ENCODE measurements at regions of chr16 and their contacts with region 1.

Region 1: GRCh38 chr16:21656795-21657768 is 4.7 kb upstream of the IGSF6 start:
- DNase-seq: no peak
- H3K4me3 ChIP-seq: no peak overlapping the region
- CTCF ChIP-seq: peak; percentile 73

Region 2: DNA sequence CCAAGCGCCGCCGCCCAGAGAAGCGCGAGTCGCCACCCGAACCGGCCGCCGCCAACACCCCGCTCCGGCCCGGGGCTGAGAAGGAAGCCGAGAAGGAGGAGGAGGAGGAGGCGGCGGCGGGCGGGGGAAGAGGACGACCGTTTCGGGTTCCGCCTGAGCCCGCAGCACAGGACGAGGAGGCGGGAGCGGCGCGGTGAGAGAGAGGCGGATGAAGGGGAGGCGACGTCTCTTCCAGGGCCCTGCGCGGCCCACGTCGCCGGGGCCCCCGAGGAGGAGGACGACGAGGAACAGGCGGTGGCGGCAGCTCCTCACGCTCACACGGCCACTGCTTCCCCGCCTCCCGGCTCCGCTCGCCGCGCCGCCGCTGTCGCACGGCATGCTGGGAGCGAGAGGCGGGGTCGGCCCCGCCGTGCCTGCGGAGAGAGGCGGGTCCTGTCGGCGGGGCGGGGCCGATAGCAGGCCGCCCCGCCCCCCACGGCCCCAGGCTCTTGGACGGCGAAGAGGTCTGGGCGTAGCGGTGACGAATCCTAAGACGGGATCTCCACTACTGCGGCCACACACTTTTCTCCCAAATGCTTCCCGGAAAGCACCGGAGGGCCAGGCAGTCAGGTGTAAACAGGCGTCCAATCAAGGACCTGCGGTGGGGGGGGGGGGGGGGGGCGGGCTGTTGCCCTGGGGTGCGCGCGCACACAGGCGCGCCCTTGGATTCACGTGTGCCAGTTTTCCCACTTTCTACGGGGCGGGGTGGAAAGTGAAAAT is 155.0 kb before region 1 on chr16:
- CTCF ChIA-PET with region 1: no interaction called
- POLR2A ChIA-PET with region 1: no interaction called
- DNase-seq: peak; percentile 74
- H3K4me3 ChIP-seq: peak overlapping the region; percentile 67
- CTCF ChIP-seq: no peak

Region 3: DNA sequence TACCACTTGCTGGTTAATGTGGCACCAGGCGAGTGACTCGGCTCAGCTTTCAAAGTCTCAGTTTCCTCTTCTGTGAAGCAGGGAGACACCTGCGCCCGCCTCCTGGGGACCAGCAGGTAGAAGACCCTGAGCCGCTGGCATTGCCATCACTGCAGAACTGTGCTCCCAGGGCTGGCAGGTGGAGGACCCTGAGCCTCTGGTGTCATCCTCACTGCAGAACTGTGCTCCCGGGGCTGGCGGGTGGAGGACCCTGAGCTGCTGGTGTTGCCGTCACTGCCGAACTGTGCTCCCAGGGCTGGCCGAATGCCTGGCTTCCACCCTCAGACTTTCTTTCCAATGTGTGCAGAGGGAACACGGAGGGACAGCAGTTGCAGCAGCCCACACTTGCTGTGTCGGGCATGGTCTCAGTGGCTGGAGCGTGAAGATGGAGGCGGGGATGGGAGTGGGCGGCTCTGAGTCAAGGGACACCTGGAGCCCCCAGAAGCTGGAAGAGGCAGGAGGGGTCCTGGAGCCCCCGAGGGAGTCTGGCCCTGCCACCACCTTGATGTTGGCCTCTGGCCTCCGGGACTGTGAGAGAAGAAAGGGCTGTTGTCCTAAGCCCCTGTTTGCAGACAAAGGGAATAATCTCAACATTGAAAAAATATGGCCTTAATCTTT is 133.5 kb before region 1 on chr16:
- CTCF ChIA-PET with region 1: no interaction called
- POLR2A ChIA-PET with region 1: no interaction called
- DNase-seq: no peak
- H3K4me3 ChIP-seq: no peak overlapping the region
- CTCF ChIP-seq: no peak

Region 4: GRCh38 chr16:21590287-21590686 is 66.8 kb before region 1 on chr16:
- CTCF ChIA-PET with region 1: interaction called, 33 read pairs
- POLR2A ChIA-PET with region 1: no interaction called
- DNase-seq: no peak
- H3K4me3 ChIP-seq: no peak overlapping the region
- CTCF ChIP-seq: no peak

Region 5: GRCh38 chr16:21626659-21627277 is 30.3 kb before region 1 on chr16:
- CTCF ChIA-PET with region 1: interaction called, 13 read pairs
- POLR2A ChIA-PET with region 1: no interaction called
- DNase-seq: peak; percentile 79
- H3K4me3 ChIP-seq: peak overlapping the region; percentile 21; the same call in 1 of the 2 replicates
- CTCF ChIP-seq: no peak

Region 6: DNA sequence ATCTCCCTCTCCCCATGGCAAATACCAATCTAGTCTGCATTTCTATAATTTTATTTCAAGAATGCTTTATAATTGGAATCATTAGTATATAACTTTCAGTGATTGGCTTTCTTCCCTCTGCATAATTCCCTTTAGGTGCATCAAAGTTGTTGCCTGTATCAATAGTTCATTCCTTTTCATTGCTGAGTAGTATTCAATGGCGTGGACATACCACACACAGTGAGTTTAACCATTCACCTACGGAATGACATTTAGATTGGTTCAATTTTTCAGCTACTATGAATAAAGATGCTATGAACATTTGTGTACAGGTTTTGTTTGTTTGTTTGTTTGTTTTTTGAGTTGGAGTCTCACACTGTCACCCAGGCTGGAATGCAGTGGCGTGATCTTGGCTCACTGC is 16.4 kb after region 1 on chr16:
- CTCF ChIA-PET with region 1: interaction called, 39 read pairs
- POLR2A ChIA-PET with region 1: no interaction called
- DNase-seq: no peak
- H3K4me3 ChIP-seq: no peak overlapping the region
- CTCF ChIP-seq: no peak

Region 7: DNA sequence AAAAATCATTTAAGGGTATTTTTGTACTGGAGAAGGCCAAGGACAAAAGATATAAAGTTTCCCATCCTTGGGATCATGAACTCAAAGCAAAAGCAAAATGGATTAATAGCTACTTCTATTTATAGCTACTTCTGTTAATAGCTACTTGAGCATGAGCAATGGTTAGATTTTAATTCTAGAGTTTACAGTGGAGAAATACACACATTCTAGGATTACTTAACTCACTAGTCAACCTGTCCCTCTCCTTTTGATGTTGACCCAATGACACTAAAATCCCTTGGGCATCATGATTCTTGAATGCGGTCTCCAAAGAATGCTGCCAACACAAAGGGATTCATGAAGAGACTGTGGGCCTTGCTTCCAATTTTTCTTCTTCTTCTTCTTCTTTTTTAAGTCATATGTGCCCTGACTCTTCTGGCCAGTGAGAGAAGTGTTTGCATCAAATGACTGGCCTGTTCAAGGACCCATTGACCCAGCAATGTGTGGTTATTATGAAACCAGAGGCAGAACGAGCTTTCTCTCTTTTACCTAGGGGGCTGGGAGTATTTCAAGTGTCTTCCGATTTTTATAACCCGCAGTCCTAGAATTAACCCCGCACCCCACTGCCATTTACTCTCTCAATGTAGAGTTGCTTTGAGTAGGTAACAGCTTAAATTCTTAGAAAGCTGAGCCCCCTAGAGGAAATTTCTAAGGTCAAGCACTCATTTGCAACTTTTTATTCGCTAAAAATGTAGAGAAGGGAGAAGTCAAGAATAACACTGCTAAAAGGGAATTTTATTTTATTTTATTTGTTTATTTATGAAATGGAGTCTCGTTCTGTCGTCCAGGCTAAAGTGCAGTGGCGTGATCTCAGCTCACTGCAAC is 41.3 kb after region 1 on chr16:
- CTCF ChIA-PET with region 1: interaction called, 11 read pairs
- POLR2A ChIA-PET with region 1: no interaction called
- DNase-seq: no peak
- H3K4me3 ChIP-seq: no peak overlapping the region
- CTCF ChIP-seq: no peak

Region 8: DNA sequence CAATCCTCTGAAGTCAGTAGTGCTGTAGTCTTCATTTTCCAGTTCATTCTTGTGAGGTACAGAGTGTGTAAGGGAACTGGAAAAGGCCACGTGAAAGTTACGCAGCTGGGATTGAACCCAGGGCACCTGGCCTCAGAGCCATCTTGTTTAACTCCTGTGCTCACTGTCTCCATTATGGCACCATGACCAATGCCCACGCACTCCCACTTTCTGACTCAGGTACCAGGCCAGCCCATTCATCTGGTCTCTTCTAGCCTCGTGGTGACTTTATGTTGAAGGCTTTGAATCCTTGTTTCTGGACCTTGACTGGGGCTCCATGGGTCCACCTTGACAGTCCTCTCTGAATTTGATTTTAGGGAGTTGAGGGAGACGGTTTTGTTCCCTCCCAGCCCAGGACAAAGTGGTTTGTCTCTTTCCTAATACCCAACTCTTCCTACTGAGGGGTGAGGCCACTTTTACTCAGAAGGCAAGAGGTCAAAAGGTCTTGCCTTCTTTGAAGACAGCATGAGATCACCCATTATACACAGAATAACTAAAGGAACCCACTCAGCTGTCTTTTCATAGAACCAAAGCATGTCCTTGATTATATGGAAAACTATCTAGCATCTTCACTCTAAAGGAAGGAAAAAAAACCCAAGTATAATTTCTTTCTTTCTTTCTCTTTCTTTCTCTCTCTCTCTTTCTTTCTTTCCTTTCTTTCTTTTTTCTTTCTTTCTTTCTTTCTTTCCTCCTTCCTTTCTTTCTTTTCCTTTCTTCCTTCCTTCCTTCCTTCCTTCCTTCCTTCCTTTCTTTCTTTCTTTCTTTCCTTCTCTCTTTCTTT is 56.7 kb after region 1 on chr16:
- CTCF ChIA-PET with region 1: interaction called, 91 read pairs
- POLR2A ChIA-PET with region 1: no interaction called
- DNase-seq: no peak
- H3K4me3 ChIP-seq: no peak overlapping the region
- CTCF ChIP-seq: no peak

Region 9: DNA sequence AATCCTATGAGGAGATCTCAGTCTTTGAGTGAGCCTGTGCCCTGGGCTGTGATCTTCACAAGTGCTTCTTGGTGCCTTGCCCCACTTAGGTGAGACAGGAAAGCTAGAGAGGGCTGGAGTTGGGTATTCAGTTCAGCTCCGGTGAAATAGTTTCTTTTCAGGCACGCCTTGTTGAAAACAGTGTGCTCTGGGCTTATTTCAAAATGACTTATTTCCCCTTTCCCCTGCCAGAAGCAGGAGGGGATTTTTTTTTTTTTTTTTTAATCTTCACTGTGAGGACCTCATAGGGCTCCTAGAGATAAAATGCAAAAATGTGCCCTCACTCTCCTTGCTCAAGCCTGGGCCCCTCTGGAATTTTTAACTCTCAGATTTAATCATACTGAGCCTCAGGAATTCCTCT is 378.1 kb after region 1 on chr16:
- CTCF ChIA-PET with region 1: no interaction called
- POLR2A ChIA-PET with region 1: no interaction called
- DNase-seq: no peak
- H3K4me3 ChIP-seq: no peak overlapping the region
- CTCF ChIP-seq: no peak